ENCODE measurements at regions of chr2 and their contacts with region 1.

Region 1: GRCh38 chr2:152025678-152026287 is 73.1 kb downstream of the CACNB4 start:
- DNase-seq: peak; percentile 86
- H3K4me3 ChIP-seq: peak overlapping the region; percentile 36
- H3K27ac ChIP-seq: no peak overlapping the region
- H3K4me1 ChIP-seq: peaks cover 10% of the 10 kb centered on the region
- H3K27me3 ChIP-seq: no peaks in the 10 kb centered on the region
- CTCF ChIP-seq: peak; percentile 100

Region 2: GRCh38 chr2:151478011-151478410 is 547.8 kb before region 1 on chr2:
- CTCF ChIA-PET with region 1: no interaction called
- POLR2A ChIA-PET with region 1: no interaction called
- intact Hi-C with region 1: loop called (anchors 10 kb)
- DNase-seq: no peak
- H3K4me3 ChIP-seq: no peak overlapping the region
- H3K27ac ChIP-seq: no peak overlapping the region
- H3K4me1 ChIP-seq: peaks cover 59% of the 10 kb centered on the region
- H3K27me3 ChIP-seq: no peaks in the 10 kb centered on the region
- CTCF ChIP-seq: no peak

Region 3: DNA sequence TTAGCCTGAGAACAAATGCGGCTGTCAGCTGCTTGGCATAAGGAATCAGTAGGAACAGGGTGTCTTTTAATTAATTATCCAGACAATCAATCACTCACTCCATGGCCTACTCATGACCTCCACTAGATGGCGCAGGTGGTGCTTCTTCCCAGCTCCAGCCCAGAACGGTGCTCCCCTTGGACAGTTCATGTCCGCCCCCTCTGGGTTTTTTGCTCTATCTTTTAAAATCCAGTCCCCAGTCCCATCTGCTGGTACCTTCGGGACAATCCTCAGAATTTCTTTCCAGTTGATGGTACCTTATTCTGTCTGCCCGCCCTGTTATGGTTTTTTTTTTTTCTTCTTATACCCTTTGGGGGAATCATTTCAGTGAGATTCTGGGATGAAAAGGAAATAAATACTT is 26.7 kb before region 1 on chr2:
- CTCF ChIA-PET with region 1: interaction called, 13 read pairs
- POLR2A ChIA-PET with region 1: no interaction called
- intact Hi-C with region 1: loop called (anchors 1 kb)
- DNase-seq: peak; percentile 74
- H3K4me3 ChIP-seq: no peak overlapping the region
- H3K27ac ChIP-seq: no peak overlapping the region
- H3K4me1 ChIP-seq: no peaks in the 10 kb centered on the region
- H3K27me3 ChIP-seq: peaks cover 3% of the 10 kb centered on the region
- CTCF ChIP-seq: peak; percentile 88

Region 4: GRCh38 chr2:152120430-152120829 is 94.6 kb after region 1 on chr2:
- CTCF ChIA-PET with region 1: interaction called, 12 read pairs
- POLR2A ChIA-PET with region 1: no interaction called
- intact Hi-C with region 1: no loop called
- DNase-seq: no peak
- H3K4me3 ChIP-seq: no peak overlapping the region
- H3K27ac ChIP-seq: no peak overlapping the region
- H3K4me1 ChIP-seq: no peaks in the 10 kb centered on the region
- H3K27me3 ChIP-seq: no peaks in the 10 kb centered on the region
- CTCF ChIP-seq: no peak

Region 5: DNA sequence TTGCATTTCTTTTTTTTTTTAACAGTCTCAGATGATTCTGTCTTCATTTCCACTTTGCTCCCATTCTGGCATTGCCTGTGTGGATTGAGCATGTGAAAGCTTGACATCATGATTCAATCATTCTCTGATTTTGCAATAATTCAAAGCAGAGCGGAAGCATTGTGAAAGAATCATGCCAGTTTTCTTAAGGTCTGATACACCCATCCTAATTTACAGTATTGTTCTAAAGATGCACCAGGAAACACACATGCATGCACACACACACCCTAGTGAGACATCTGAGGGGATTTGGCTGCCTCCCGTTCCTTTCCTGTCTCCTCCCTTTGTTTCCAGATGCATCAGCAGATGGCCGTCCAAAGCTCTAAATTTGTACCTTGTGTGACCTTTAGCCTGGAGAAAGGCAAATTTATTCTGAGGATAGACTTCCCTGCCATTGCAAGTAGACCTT is 406.4 kb after region 1 on chr2:
- CTCF ChIA-PET with region 1: no interaction called
- POLR2A ChIA-PET with region 1: no interaction called
- intact Hi-C with region 1: no loop called
- DNase-seq: peak; percentile 97
- H3K4me3 ChIP-seq: no peak overlapping the region
- H3K27ac ChIP-seq: peak overlapping the region; percentile 90
- H3K4me1 ChIP-seq: peaks cover 88% of the 10 kb centered on the region
- H3K27me3 ChIP-seq: no peaks in the 10 kb centered on the region
- CTCF ChIP-seq: no peak

Measured in A673 (cell line).